ENCODE measurements at regions of chr4 and their contacts with region 1.

Region 1: DNA sequence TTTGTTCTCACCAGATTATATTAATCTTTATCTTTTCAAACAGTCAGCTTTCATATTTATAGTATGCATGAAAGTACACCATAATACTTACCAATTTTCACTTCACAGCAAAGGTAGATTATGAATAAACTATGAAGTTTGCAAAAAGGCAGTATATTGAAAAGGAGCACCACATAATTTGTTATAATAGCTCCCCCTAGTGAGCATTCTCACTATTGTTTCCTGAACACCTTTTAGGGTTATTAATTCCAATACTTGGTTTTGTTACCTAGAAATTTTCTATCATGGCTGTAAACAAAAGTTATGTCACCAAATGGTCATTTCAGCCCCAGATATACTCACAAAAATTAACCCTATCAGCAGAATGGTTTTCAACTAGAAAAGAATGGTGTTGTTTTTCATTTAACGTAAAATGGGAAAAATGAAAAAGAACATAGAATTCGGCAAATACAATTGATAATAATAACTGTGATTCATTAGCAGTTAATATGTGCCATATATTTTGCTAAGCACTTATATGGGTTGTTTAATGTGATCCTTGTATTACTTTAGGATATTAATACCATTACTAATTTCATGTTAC is 30.2 kb upstream of the NKX6-1 start:
- DNase-seq: no peak
- ATAC-seq: no peak
- H3K4me3 Mint-ChIP-seq: no peak overlapping the region
- H3K27ac Mint-ChIP-seq: no peak overlapping the region
- H3K4me1 Mint-ChIP-seq: peaks cover 7% of the 10 kb centered on the region
- H3K27me3 Mint-ChIP-seq: no peaks in the 10 kb centered on the region
- CTCF ChIP-seq: peak; percentile 63

Region 2: GRCh38 chr4:84511703-84512102 is 17.6 kb before region 1 on chr4:
- CTCF ChIA-PET with region 1: interaction called, 15 read pairs
- POLR2A ChIA-PET with region 1: no interaction called
- DNase-seq: no peak
- ATAC-seq: no peak
- H3K4me3 Mint-ChIP-seq: no peak overlapping the region
- H3K27ac Mint-ChIP-seq: no peak overlapping the region
- H3K4me1 Mint-ChIP-seq: no peaks in the 10 kb centered on the region
- H3K27me3 Mint-ChIP-seq: no peaks in the 10 kb centered on the region
- CTCF ChIP-seq: no peak

Region 3: DNA sequence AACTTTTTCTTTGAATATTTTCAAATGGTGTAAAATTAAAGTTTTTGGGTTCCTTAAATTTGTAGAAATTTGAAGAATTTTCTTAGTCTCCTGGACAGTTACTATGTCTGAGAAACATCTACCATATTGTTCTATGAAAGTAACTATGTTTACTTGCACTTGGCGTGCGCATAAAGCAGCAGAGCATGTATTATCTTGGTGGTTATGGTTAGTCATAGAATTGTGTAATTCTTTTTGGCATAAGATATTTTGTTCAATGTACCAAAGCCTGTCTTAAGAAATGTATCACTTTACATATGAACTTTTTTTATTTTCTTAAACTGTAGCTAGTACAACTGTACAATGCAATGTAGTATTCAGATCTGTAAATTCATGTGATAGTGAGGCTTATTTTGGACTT is 102.8 kb after region 1 on chr4:
- CTCF ChIA-PET with region 1: no interaction called
- POLR2A ChIA-PET with region 1: no interaction called
- DNase-seq: no peak
- ATAC-seq: no peak
- H3K4me3 Mint-ChIP-seq: no peak overlapping the region
- H3K27ac Mint-ChIP-seq: no peak overlapping the region
- H3K4me1 Mint-ChIP-seq: peaks cover under 1% of the 10 kb centered on the region
- H3K27me3 Mint-ChIP-seq: no peaks in the 10 kb centered on the region
- CTCF ChIP-seq: no peak

Region 4: DNA sequence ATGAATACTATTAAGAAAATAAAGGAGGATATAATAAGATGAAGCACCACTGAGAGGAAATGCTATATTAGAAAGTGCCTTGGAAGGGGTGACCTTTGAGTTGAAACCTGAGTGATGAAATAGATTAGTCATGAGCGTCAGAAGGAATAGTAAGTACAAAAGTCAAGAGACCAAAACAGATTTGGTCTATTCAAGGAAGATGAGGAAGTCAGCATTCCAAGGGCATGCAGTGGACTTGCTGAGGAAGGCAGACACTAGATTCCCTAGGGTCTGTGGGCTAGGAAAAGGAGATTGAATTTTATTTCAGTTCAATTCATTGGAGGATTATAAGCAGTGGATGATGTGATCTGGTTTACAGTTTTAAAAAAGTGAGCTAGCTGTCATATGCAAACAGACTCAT is 510.3 kb after region 1 on chr4:
- CTCF ChIA-PET with region 1: no interaction called
- POLR2A ChIA-PET with region 1: no interaction called
- DNase-seq: no peak
- ATAC-seq: no peak
- H3K4me3 Mint-ChIP-seq: no peak overlapping the region
- H3K27ac Mint-ChIP-seq: no peak overlapping the region
- H3K4me1 Mint-ChIP-seq: peaks cover 4% of the 10 kb centered on the region
- H3K27me3 Mint-ChIP-seq: no peaks in the 10 kb centered on the region
- CTCF ChIP-seq: no peak

Measured in WTC11 (cell line).